Head of caudate nucleus (tissue), 42 donors: ENCODE measurements at regions of chr1 and their contacts with region 1.

Region 1: DNA sequence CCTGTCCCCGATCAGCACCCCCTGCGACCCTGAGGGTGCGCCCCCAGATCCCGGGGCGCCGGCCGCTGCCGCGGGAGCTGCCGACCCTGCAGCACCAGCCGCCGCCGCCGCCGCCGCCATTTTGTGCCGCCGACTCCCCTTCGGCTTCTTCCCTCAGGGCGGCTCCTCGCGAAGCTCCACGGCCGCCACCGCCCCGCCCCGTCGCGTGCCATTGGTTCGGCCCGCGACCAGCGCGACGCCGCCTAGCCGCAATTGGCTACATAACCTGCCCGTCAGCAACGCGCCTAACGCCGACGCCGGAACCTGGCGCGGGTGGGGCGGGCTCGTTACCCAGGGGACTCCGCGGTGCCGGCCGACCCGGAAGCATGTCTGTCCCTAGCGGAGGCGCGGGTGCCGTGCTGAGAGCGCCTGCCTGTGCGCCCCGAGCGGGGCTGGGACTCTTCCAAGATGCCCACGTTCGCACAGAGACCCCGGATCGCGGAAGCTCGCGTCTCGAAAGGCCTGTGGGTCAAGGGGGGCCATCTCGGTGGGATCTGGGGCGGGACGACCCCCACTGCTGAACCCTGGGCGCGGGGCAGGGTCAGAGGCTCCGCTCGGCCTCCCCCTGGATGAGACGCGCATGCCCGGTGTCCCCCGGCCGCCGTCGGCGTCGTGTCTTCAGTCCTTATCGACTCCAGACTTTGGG is at the start of gene CCNL2:
- DNase-seq: peak; percentile 95 to 100 (median 99)

Region 2: DNA sequence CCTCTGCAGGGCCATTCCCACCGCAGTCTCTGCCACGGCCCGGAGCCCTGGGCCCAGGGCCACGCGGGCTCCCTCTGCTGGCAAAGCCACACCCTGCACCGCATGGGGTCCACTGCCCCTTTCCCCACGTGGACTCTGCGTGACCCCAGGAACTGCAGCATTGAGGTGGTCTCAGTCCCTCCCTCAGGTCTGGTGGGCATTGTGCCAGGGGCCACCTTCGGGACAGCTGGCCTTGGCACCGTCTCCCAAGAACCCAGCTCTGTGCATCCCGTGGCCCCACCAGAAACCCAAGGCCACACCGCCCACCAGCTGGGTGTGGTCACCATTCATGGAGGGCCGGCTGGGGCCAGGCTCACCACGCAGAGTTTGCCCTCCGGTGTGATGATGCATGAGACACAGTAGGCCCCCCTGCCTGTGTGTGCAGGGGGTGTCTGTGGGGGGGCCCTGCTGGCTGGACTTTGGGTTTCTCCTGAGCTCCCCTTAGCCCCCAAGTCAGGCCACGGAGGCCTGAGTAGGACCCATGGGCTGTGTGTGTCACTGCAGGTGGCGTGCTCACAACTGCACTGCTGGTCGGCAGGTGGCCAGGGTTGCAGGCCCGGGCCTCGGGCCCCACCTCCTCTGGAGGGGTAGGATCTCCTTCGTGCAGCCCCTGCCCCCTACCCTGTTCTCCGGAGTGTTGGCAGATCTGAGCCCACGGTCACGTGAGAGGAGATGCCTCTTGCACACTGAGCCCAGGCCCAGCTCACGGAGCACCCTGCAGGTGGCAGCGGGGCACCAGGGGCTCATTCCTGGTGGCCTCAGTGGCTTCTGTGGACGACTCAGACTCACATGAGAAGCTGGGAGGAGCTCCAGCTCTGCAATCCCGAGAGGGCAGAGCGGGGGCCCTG is 41.9 kb after region 1 on chr1:
- intact Hi-C with region 1: loop called (anchors 10 kb)
- DNase-seq: peak in 31 of 42 donors; percentile 23 to 83 (median 62)